Heart right ventricle (tissue), 16 donors: ENCODE measurements at regions of chr5 and their contacts with region 1.

Region 1: DNA sequence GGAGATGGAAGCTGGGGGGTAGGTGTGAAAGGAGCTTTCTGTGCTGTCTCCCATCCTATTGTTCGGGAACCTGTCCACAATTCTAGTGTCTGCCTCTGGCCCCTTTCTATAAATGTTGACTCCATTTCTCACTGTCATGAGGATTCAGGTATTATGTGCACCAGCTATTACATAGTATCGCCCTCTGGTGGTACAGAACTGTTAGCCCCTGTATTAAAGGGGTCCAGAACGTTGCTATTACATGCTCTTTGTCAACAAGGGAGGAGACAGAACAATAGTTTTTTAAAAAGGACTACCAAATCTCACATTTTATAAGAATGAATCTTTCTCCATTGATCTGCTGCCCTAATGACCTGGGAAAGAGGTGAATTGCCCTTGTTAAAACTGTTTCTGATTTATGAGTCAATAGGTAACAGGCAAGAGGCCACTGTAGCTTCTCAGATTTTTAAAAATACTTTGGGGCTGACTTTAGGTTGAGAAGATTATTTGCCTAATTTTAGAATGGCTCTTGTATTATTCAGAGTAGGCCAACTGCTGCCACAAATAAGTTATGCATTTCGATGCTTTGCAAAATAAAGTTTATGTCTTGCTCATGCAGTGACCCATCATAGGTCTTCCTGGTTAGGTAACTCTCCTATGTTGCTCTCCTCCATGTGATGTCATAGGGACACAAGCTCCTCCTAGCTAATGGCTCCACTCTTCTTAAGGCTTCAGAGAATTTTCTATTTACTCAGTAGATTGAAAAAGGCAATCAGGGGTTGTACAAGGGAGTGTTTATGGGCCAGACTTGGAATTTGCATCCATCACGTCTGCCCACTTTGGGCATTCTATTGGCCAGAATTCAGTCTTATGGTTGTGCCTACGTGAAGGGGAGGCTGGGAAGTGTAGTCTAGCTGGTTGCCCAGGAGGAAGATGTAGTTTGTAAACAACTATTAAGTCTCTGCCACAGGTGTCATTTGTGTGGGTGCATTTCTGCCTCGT is 20.8 kb downstream of the DCANP1 start:
- DNase-seq: no peak
- ATAC-seq: peak in 6 of 8 donors; percentile 43 to 66 (median 61)
- H3K4me3 ChIP-seq: no peak overlapping the region
- H3K27ac ChIP-seq: peak overlapping the region in 2 of 10 donors; percentile 21 to 69
- H3K4me1 ChIP-seq: peaks cover 0 to 62% (median 13%) of the 10 kb centered on the region in 9 donors
- H3K27me3 ChIP-seq: no peaks in the 10 kb centered on the region
- CTCF ChIP-seq: peak; percentile 54 to 72 (median 70)

Region 2: DNA sequence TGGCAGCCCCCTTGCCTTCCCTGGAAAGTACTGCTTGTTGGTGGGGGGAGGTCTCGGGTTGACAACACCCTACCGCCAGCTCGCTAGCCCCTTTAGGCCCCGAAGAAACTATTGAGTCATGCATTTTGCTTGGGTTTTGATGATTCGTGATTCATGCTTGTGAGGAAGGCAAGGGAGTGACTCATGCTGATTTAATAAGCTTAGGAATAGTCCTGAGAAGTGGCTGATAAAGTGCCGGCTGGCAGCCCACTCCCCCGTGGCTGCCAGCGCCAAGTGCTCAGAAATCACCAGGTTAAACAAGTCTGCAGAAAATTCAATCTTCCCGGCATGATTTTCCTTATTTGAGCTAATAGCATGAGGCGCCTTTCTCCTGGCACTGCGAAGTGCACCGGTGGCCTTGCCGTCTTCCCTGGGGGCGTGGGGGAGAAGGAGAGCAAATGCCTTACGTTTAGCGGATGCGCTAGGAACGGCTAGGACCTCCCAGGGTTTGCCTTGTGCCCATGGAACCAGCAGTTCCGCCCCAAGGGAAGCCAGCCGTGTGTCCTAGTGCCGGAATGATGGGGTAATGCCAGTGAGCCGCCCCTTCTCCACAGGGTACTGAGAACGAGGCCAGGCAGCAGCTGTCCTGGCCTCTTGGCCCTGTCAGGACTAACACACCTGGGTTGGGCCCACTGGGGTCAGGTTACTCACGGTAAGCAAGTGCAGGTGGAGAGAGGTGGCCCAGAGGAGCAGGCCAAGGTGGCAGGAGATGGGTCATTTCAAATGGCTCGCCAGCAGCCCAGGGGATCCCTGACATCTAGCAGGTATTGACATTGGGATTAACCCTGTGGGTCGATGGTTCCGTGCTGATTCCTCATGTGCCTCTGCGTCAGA is 179.2 kb before region 1 on chr5:
- intact Hi-C with region 1: loop called in 2 of 10 experiments (anchors 10 kb)
- DNase-seq: no peak
- ATAC-seq: peak in 1 of 8 donors; percentile 30
- H3K4me3 ChIP-seq: no peak overlapping the region
- H3K27ac ChIP-seq: no peak overlapping the region
- H3K4me1 ChIP-seq: peaks cover 0 to 44% (median 26%) of the 10 kb centered on the region in 9 donors
- H3K27me3 ChIP-seq: no peaks in the 10 kb centered on the region
- CTCF ChIP-seq: no peak

Region 3: DNA sequence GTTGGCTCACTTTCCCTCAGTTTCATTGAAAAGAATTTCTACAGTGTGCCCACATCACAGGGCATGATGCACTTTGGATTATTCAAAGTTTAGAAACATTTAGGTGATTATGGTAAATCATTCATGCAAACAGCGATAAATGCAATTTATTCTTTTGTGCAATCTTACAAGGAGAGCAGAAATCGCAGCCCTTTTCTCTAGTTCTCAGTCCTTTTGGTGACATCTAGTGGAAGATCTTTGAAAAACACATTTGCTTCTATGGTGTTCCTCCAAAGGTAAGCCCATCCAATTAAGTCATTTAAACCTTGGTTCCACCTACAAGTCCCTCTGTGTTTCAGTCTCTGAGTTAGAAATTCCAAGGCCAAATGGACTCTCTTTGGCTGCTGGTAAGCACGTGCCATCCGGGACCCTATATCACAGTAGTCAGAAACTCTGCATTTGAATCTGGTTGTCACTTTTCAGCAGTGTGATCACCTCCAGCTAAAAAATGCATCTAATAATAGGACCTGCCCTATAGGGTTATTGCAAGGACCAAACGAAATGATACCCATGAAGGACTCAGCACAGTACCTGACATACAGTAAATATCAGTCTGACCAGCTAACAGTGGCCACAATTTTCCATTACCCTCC is 93.8 kb before region 1 on chr5:
- intact Hi-C with region 1: loop called in 2 of 10 experiments (anchors 10 kb)
- DNase-seq: no peak
- ATAC-seq: no peak
- H3K4me3 ChIP-seq: no peak overlapping the region
- H3K27ac ChIP-seq: no peak overlapping the region
- H3K4me1 ChIP-seq: peaks cover 0 to 25% (median 0%) of the 10 kb centered on the region in 9 donors
- H3K27me3 ChIP-seq: no peaks in the 10 kb centered on the region
- CTCF ChIP-seq: peak in 8 of 9 donors; percentile 7 to 65 (median 53)

Region 4: DNA sequence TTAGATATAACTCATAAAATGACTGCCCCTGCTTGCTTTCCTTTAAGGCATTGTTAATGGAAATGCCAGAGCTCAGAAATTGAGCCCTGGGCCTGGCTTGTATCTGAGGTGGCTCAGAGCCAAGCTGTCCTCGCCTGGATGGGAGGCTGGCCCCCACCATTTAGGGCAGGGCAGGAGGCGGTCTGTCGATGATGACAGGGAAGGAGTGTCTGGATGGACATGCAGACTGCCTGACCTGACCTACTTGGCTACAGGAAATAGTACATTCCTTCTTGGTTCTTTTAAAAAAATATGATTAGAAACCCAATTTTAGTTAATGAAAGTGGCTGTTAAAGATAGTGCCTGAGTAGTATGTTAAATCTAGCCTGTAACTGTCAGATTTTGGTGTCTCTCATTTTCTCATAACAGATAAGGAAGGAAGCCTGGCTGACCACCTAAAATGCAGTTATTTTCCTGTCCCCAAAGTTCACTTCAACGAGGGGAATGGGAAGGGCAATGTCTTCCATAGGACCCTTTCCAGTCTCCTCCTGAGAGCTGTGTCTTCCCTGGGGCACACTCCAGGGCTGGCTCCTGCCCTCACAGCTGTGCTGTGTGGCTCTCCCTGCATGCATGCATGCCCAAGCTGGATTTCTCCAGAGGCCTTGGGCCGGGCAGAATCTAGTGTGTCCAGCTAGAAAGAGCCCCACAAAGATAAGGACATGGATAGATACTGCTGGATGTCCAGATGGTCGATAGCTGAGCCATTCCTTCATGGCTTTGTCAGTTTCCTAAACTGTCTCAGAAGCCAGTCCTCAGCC is 69.7 kb before region 1 on chr5:
- intact Hi-C with region 1: loop called in 2 of 10 experiments (anchors 5 kb)
- DNase-seq: peak; percentile 81 to 83
- ATAC-seq: peak; percentile 94 to 97 (median 96)
- H3K4me3 ChIP-seq: no peak overlapping the region
- H3K27ac ChIP-seq: peak overlapping the region; percentile 4 to 72 (median 58)
- H3K4me1 ChIP-seq: peaks cover 18 to 54% (median 49%) of the 10 kb centered on the region in 9 donors
- H3K27me3 ChIP-seq: no peaks in the 10 kb centered on the region
- CTCF ChIP-seq: no peak

Region 5: DNA sequence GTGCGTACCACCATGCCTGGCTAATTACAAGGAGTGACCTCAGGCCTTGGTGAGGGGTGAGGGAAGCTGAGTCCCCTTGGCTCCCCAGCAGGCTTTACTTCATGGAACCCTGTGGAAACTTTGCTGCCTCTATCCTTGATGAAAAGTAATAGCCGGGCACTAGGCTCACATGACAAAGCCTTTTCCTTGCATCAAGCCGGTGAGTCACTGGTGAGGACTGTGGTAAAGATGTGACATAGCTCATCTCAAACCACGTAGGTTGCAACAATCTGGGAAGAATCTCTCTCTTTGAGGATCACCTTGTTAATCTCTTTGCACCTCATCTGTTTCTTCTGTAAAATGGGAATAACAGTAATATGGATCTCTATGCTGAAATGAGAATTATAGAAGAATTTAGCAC is 291.8 kb after region 1 on chr5:
- intact Hi-C with region 1: no loop called
- DNase-seq: no peak
- ATAC-seq: no peak
- H3K4me3 ChIP-seq: no peak overlapping the region
- H3K27ac ChIP-seq: no peak overlapping the region
- H3K4me1 ChIP-seq: peaks cover 0 to 13% (median 0%) of the 10 kb centered on the region in 9 donors
- H3K27me3 ChIP-seq: peaks cover 0 to 6% (median 0%) of the 10 kb centered on the region in 7 donors
- CTCF ChIP-seq: no peak